ENCODE measurements at regions of chr4 and their contacts with region 1.

Region 1: GRCh38 chr4:38856524-38857337 is at the start of gene TLR6:
- DNase-seq: peak in 8 of 9 donors; percentile 37 to 90 (median 83)
- ATAC-seq: peak; percentile 83
- H3K4me3 ChIP-seq: peak within 1 kb of the TSS; percentile 14
- H3K4me3 Mint-ChIP-seq: peak within 1 kb of the TSS in 9 of 10 donors; percentile 62 to 81 (median 67)
- H3K27ac ChIP-seq: peak within 1 kb of the TSS; percentile 49
- H3K27ac Mint-ChIP-seq: peak within 1 kb of the TSS; percentile 76 to 93 (median 90)
- H3K4me1 ChIP-seq: peaks cover 0 to 26% of the 10 kb centered on the region in 2 donors
- H3K4me1 Mint-ChIP-seq: peaks cover 28 to 52% (median 46%) of the 10 kb centered on the region in 7 donors
- H3K27me3 ChIP-seq: no peaks in the 10 kb centered on the region
- H3K27me3 Mint-ChIP-seq: peaks cover 0 to 6% (median 0%) of the 10 kb centered on the region in 5 donors
- total RNA-seq, gene TLR6: 1.00 to 8.8 (median 1.9) TPM

Region 2: GRCh38 chr4:38062088-38062893 is 794.4 kb before region 1 on chr4:
- CTCF ChIA-PET with region 1: interaction called, 4 read pairs
- POLR2A ChIA-PET with region 1: no interaction called
- intact Hi-C with region 1: loop called (anchors 1 to 5 kb)
- DNase-seq: peak; percentile 15 to 55 (median 41)
- ATAC-seq: peak; percentile 78
- H3K4me3 ChIP-seq: peak overlapping the region; percentile 33
- H3K4me3 Mint-ChIP-seq: peak overlapping the region; percentile 66 to 95 (median 84)
- H3K27ac ChIP-seq: no peak overlapping the region
- H3K27ac Mint-ChIP-seq: peak overlapping the region in 8 of 9 donors; percentile 35 to 80 (median 61)
- H3K4me1 ChIP-seq: no peaks in the 10 kb centered on the region
- H3K4me1 Mint-ChIP-seq: peaks cover 0 to 20% (median 10%) of the 10 kb centered on the region in 7 donors
- H3K27me3 ChIP-seq: no peaks in the 10 kb centered on the region
- H3K27me3 Mint-ChIP-seq: no peaks in the 10 kb centered on the region

Region 3: GRCh38 chr4:38319456-38320342 is 537.0 kb before region 1 on chr4:
- CTCF ChIA-PET with region 1: no interaction called
- POLR2A ChIA-PET with region 1: no interaction called
- intact Hi-C with region 1: loop called in 1 of 2 experiments (anchors 2 kb)
- DNase-seq: peak; percentile 73 to 96 (median 83)
- ATAC-seq: peak; percentile 91
- H3K4me3 ChIP-seq: peak overlapping the region; percentile 38
- H3K4me3 Mint-ChIP-seq: peak overlapping the region; percentile 80 to 95 (median 88)
- H3K27ac ChIP-seq: peak overlapping the region; percentile 68
- H3K27ac Mint-ChIP-seq: peak overlapping the region; percentile 87 to 98 (median 94)
- H3K4me1 ChIP-seq: peaks cover 19 to 35% of the 10 kb centered on the region in 2 donors
- H3K4me1 Mint-ChIP-seq: peaks cover 33 to 75% (median 70%) of the 10 kb centered on the region in 7 donors
- H3K27me3 ChIP-seq: no peaks in the 10 kb centered on the region
- H3K27me3 Mint-ChIP-seq: peaks cover 0 to 10% (median 0%) of the 10 kb centered on the region in 5 donors

Region 4: GRCh38 chr4:38782452-38783108 is 74.2 kb before region 1 on chr4 and contains the start of gene TLR10:
- CTCF ChIA-PET with region 1: interaction called, 7 read pairs
- POLR2A ChIA-PET with region 1: no interaction called
- intact Hi-C with region 1: loop called (anchors 1 to 2 kb)
- DNase-seq: peak in 7 of 9 donors; percentile 10 to 56 (median 43)
- ATAC-seq: peak; percentile 79
- H3K4me3 ChIP-seq: no peak within 1 kb of the TSS
- H3K4me3 Mint-ChIP-seq: peak within 1 kb of the TSS in 3 of 10 donors; percentile 3 to 58 (median 49)
- H3K27ac ChIP-seq: no peak within 1 kb of the TSS
- H3K27ac Mint-ChIP-seq: no peak within 1 kb of the TSS
- H3K4me1 ChIP-seq: no peaks in the 10 kb centered on the region
- H3K4me1 Mint-ChIP-seq: peaks cover 0 to 7% (median 6%) of the 10 kb centered on the region in 7 donors
- H3K27me3 ChIP-seq: no peaks in the 10 kb centered on the region
- H3K27me3 Mint-ChIP-seq: peaks cover 0 to 8% (median 0%) of the 10 kb centered on the region in 5 donors
- total RNA-seq, gene TLR10: 0.13 to 1.6 (median 0.58) TPM in 4 of 5 experiments, not detected in the other

Region 5: GRCh38 chr4:38837849-38838248 is 18.9 kb before region 1 on chr4:
- CTCF ChIA-PET with region 1: interaction called, 4 read pairs
- POLR2A ChIA-PET with region 1: no interaction called
- intact Hi-C with region 1: loop called in 1 of 2 experiments (anchors 1 kb)
- DNase-seq: peak in 7 of 9 donors; percentile 23 to 56 (median 43)
- ATAC-seq: peak; percentile 72
- H3K4me3 ChIP-seq: no peak overlapping the region
- H3K4me3 Mint-ChIP-seq: peak overlapping the region in 9 of 10 donors; percentile 0 to 64 (median 36)
- H3K27ac ChIP-seq: no peak overlapping the region
- H3K27ac Mint-ChIP-seq: peak overlapping the region in 8 of 9 donors; percentile 1 to 39 (median 18)
- H3K4me1 ChIP-seq: peaks cover 7 to 16% of the 10 kb centered on the region in 2 donors
- H3K4me1 Mint-ChIP-seq: peaks cover 16 to 25% (median 21%) of the 10 kb centered on the region in 7 donors
- H3K27me3 ChIP-seq: no peaks in the 10 kb centered on the region
- H3K27me3 Mint-ChIP-seq: no peaks in the 10 kb centered on the region